ENCODE measurements at regions of chr4 and their contacts with region 1.

Region 1: DNA sequence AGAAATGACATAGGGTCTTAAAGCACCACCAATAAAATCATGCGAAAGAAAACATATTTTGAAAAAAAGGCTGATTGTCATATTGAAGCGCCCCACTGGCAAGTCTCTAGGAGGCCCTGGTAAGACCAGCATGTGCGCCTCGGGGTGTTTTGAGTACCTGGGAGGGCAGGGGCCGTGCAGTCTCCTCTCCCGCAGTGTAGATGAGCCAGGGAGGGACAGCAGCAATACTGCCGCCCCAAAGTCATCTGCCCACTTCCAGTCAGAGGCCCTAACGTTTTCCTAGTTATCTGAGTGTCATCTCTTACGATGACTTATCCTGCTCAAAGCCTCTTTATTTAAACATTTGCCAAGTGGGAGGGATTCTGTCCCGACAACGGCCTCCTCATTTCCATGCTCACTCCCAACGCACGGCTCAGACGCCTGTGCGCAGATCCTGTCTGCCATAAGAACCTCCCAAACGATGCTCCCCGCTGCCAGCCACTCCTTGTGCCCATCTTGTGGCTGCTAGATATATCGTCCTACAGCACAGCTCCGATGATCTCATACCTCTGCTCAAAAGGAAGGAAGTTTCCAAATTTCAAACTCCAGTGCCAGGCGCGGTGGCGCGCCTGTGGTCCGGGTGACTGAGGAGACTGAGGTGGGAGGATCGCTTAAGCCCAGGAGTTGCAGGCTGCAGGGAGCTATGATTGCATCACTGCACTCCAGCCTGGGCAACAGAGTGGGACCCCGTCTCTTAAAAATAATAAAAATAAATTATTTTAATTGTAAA is 17.2 kb upstream of the SCRG1 start:
- DNase-seq: peak; percentile 5
- H3K4me3 ChIP-seq: no peak overlapping the region
- H3K27ac ChIP-seq: peak overlapping the region in 3 of 4 donors; percentile 13 to 58 (median 29)
- H3K4me1 ChIP-seq: peaks cover 0 to 6% (median 0%) of the 10 kb centered on the region in 3 donors
- H3K27me3 ChIP-seq: no peaks in the 10 kb centered on the region
- CTCF ChIP-seq: no peak
- POLR2A ChIP-seq: peak in 1 of 4 donors; percentile 23

Region 2: DNA sequence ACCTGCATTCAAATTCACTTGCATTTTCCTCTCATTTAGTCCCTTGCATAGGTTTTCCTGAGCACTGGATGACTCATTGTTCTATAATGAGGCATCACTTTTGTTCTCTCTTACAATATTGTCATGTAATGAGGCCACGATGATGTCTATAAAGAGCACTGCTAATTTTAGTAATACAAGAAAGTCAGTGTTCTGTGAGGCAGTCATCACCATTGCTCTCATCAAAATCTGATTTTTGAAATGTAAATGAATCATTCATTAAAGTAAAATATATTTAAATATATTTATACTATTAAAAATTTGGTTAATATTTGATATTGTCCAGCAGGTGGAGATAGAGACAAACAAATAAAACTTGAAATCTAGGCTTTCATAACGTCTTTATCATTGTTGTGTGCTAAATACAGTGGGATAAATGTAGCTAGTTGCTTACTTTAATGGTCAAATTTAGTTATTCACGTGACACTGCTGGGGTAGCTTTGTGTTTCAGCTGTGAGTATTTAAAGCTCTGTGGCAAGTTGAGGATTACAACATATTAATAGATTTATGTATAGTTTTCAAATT is 97.3 kb before region 1 on chr4:
- intact Hi-C with region 1: loop called (anchors 5 kb)
- DNase-seq: no peak
- H3K4me3 ChIP-seq: no peak overlapping the region
- H3K27ac ChIP-seq: no peak overlapping the region
- H3K4me1 ChIP-seq: peaks cover 0 to 10% (median 0%) of the 10 kb centered on the region in 3 donors
- H3K27me3 ChIP-seq: no peaks in the 10 kb centered on the region
- CTCF ChIP-seq: peak in 4 of 6 experiments; percentile 3 to 45 (median 39)
- POLR2A ChIP-seq: no peak

Region 3: GRCh38 chr4:173494013-173494970 is 78.2 kb after region 1 on chr4:
- intact Hi-C with region 1: loop called (anchors 5 kb)
- DNase-seq: no peak
- H3K4me3 ChIP-seq: peak overlapping the region; percentile 17 to 54 (median 32)
- H3K27ac ChIP-seq: no peak overlapping the region
- H3K4me1 ChIP-seq: peaks cover 3 to 18% (median 3%) of the 10 kb centered on the region in 3 donors
- H3K27me3 ChIP-seq: peaks cover 0 to 51% (median 2%) of the 10 kb centered on the region in 4 donors
- CTCF ChIP-seq: peak; percentile 67 to 77 (median 74)
- POLR2A ChIP-seq: no peak

Measured in esophagus squamous epithelium (tissue), 5 donors.